ENCODE measurements at regions of chr10 and their contacts with region 1.

Region 1: DNA sequence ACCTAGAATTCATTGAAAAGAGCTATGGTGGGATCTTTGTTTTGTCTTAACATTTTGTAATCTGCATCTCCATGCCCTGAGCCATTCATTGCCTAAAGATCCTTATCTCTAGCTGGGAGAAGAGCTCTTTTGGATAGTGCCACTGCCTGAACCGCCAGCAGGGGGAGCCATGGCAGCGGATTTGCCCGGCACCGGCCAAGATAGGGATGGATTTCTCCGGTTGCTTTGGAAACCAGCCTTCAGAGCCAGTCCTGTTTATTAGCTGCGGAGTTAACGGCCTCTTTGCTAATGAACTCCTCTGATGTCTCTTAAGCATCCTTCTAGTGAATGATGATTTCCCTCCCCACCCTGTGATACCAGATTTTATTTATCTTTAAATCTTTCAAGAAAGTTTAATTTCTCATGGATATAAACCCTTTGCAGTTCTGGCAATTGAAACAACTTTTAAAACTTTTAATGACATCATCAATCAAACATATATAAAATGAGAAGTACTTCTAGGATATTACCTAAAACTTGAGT is 58.2 kb upstream of the LYZL2 start:
- DNase-seq: peak; percentile 72
- ATAC-seq: peak; percentile 67
- H3K4me3 ChIP-seq: no peak overlapping the region
- H3K4me3 Mint-ChIP-seq: no peak overlapping the region
- H3K27ac ChIP-seq: no peak overlapping the region
- H3K27ac Mint-ChIP-seq: no peak overlapping the region
- H3K4me1 ChIP-seq: peaks cover 0 to 3% of the 10 kb centered on the region in 2 donors
- H3K4me1 Mint-ChIP-seq: no peaks in the 10 kb centered on the region
- H3K27me3 ChIP-seq: peaks cover 0 to 18% (median 9%) of the 10 kb centered on the region in 4 experiments
- H3K27me3 Mint-ChIP-seq: peaks cover 41% of the 10 kb centered on the region
- CTCF ChIP-seq: peak; percentile 98

Region 2: DNA sequence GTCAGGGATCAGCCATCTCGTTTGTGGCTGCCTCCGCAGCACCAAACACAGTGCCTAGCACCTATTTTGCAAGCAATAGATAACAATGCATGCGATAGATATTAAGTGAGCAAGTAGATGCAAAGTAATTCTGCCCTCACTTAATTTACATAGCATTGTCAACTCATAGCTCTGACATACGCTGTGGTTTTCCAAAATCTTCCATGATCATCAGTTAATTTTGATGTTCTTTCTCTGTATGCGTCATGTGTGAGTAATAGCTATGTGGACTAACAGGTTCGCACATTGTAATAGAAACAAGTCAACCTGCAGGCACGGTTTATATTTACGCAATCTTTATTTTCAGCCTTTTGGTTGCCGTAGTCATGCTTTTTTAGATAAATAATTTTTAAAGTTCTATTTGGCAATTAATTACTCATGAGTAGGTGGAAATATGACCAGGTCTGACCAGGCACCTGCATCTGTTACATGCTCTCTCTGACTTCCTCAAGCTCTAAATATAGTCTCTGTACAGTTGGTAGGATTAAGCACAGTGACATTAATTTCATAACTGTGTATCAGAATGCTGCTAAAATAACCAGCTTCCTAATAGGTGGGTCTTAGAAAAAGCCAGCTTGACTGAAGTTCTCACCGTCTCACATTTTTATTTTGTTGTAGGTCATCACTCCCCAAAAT is 240.5 kb before region 1 on chr10:
- CTCF ChIA-PET with region 1: no interaction called
- POLR2A ChIA-PET with region 1: no interaction called
- intact Hi-C with region 1: no loop called
- DNase-seq: no peak
- ATAC-seq: no peak
- H3K4me3 ChIP-seq: no peak overlapping the region
- H3K4me3 Mint-ChIP-seq: peak overlapping the region; percentile 16
- H3K27ac ChIP-seq: peak overlapping the region; percentile 9 to 49
- H3K27ac Mint-ChIP-seq: peak overlapping the region; percentile 28
- H3K4me1 ChIP-seq: peaks cover 34% of the 10 kb centered on the region in 2 donors
- H3K4me1 Mint-ChIP-seq: peaks cover 51% of the 10 kb centered on the region
- H3K27me3 ChIP-seq: no peaks in the 10 kb centered on the region
- H3K27me3 Mint-ChIP-seq: no peaks in the 10 kb centered on the region
- CTCF ChIP-seq: no peak

Region 3: DNA sequence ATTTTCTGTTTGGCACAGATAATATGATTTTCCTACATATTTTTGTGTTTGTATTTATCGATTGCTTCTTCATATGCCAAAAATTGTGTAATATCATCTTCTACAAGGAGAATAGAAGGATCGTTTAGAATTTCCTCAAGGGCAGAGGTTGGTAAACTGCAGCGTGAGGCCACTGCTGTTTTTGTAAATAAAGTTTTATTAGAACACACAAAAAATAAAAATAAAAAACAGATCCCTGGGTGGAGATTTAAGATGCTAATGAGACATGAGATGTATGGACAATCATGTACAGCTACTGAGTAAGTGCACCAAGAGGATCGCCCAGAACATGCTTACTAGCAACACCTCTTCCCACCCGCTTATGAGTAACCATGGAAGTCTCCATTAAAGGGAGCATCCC is 67.8 kb before region 1 on chr10:
- CTCF ChIA-PET with region 1: no interaction called
- POLR2A ChIA-PET with region 1: no interaction called
- intact Hi-C with region 1: no loop called
- DNase-seq: no peak
- ATAC-seq: no peak
- H3K4me3 ChIP-seq: no peak overlapping the region
- H3K4me3 Mint-ChIP-seq: no peak overlapping the region
- H3K27ac ChIP-seq: no peak overlapping the region
- H3K27ac Mint-ChIP-seq: no peak overlapping the region
- H3K4me1 ChIP-seq: no peaks in the 10 kb centered on the region
- H3K4me1 Mint-ChIP-seq: no peaks in the 10 kb centered on the region
- H3K27me3 ChIP-seq: no peaks in the 10 kb centered on the region
- H3K27me3 Mint-ChIP-seq: peaks cover 23% of the 10 kb centered on the region
- CTCF ChIP-seq: no peak

Region 4: GRCh38 chr10:30671026-30671616 is 16.6 kb before region 1 on chr10:
- CTCF ChIA-PET with region 1: interaction called, 18 read pairs
- POLR2A ChIA-PET with region 1: no interaction called
- intact Hi-C with region 1: no loop called
- DNase-seq: peak; percentile 72
- ATAC-seq: peak; percentile 53
- H3K4me3 ChIP-seq: peak overlapping the region in 2 of 5 experiments; percentile 17 to 54
- H3K4me3 Mint-ChIP-seq: peak overlapping the region; percentile 44
- H3K27ac ChIP-seq: no peak overlapping the region
- H3K27ac Mint-ChIP-seq: no peak overlapping the region
- H3K4me1 ChIP-seq: peaks cover 0 to 3% of the 10 kb centered on the region in 2 donors
- H3K4me1 Mint-ChIP-seq: peaks cover 5% of the 10 kb centered on the region
- H3K27me3 ChIP-seq: peaks cover 0 to 15% (median 6%) of the 10 kb centered on the region in 4 experiments
- H3K27me3 Mint-ChIP-seq: peaks cover 25% of the 10 kb centered on the region
- CTCF ChIP-seq: peak; percentile 85

Region 5: GRCh38 chr10:30701451-30702173 is 13.9 kb after region 1 on chr10:
- CTCF ChIA-PET with region 1: interaction called, 65 read pairs
- POLR2A ChIA-PET with region 1: interaction called, 3 read pairs
- intact Hi-C with region 1: loop called (anchors 2 kb)
- DNase-seq: peak; percentile 57
- ATAC-seq: peak; percentile 52
- H3K4me3 ChIP-seq: peak overlapping the region in 4 of 5 experiments; percentile 1 to 44 (median 26)
- H3K4me3 Mint-ChIP-seq: peak overlapping the region; percentile 89
- H3K27ac ChIP-seq: peak overlapping the region; percentile 66 to 76
- H3K27ac Mint-ChIP-seq: peak overlapping the region; percentile 96
- H3K4me1 ChIP-seq: peaks cover 49% of the 10 kb centered on the region in 2 donors
- H3K4me1 Mint-ChIP-seq: peaks cover 59% of the 10 kb centered on the region
- H3K27me3 ChIP-seq: no peaks in the 10 kb centered on the region
- H3K27me3 Mint-ChIP-seq: no peaks in the 10 kb centered on the region
- CTCF ChIP-seq: no peak

Region 6: GRCh38 chr10:30783939-30784500 is 96.3 kb after region 1 on chr10:
- CTCF ChIA-PET with region 1: interaction called, 9 read pairs
- POLR2A ChIA-PET with region 1: no interaction called
- intact Hi-C with region 1: loop called (anchors 5 kb)
- DNase-seq: peak; percentile 82
- ATAC-seq: peak; percentile 80
- H3K4me3 ChIP-seq: peak overlapping the region; percentile 42 to 80 (median 63)
- H3K4me3 Mint-ChIP-seq: peak overlapping the region; percentile 77
- H3K27ac ChIP-seq: no peak overlapping the region
- H3K27ac Mint-ChIP-seq: no peak overlapping the region
- H3K4me1 ChIP-seq: peaks cover 0 to 16% of the 10 kb centered on the region in 2 donors
- H3K4me1 Mint-ChIP-seq: peaks cover 11% of the 10 kb centered on the region
- H3K27me3 ChIP-seq: peaks cover 0 to 16% (median 4%) of the 10 kb centered on the region in 4 experiments
- H3K27me3 Mint-ChIP-seq: peaks cover 10% of the 10 kb centered on the region
- CTCF ChIP-seq: peak; percentile 73

Measured in B cell (primary cell).